GM18951 (cell line): ENCODE measurements at regions of chr9 and their contacts with region 1.

Region 1: DNA sequence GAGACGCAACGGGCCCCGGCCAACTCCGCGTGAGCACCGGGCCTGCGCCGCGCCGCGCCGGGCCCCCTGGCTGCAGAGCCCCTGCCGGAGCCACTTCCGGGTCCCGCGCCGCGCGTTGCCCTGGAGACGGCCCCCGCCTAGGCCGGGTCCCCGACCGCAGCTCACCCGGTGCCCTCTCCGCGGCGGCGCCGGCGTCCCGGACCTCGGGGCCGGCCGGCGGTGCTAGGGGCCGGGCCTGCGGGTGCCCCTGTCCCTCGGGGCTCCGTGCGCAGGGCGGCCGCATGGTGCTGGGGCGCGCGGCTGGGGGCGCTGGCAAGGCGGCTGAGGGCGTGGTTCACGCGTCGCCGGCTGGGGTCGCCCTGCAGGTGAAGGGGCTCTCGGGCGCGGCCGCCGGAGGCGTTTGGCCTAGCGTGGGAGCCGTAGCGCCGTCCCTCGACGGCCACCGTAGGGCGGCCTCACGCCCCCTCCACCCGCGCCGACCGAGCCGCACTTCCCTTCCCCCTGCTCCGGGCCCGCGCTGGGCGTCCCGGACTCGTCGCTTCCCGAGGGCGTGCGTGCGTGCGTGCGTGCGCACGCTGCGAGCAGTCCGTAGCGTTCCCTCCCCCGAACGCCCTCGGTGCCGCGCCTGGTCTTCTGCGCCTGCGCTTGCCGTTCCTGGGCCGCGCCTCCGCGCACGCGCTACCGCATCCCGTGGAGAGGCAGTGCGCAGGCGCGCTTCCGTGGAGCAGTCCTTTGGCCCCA is at the start of gene TMEM250:
- POLR2A ChIP-seq: no peak

Region 2: GRCh38 chr9:135961277-135961705 is 157.2 kb before region 1 on chr9 and contains the start of gene UBAC1:
- in situ Hi-C with region 1: loop called (anchors 10 kb)
- POLR2A ChIP-seq: peak; percentile 53